ENCODE measurements at regions of chr1 and their contacts with region 1.

Region 1: GRCh38 chr1:112337028-112337531 is 58.9 kb upstream of the CTTNBP2NL start:
- DNase-seq: peak; percentile 36 to 51
- ATAC-seq: peak; percentile 68 to 91 (median 84)
- H3K4me3 ChIP-seq: peak overlapping the region in 1 of 10 donors; percentile 31
- H3K27ac ChIP-seq: no peak overlapping the region
- H3K4me1 ChIP-seq: peaks cover 0 to 8% (median 3%) of the 10 kb centered on the region in 9 donors
- H3K27me3 ChIP-seq: peaks cover 0 to 4% (median 0%) of the 10 kb centered on the region in 7 donors
- CTCF ChIP-seq: peak; percentile 53 to 80 (median 73)

Region 2: GRCh38 chr1:111789666-111790316 is 547.3 kb before region 1 on chr1:
- intact Hi-C with region 1: loop called in 6 of 10 experiments (anchors 2 to 10 kb)
- DNase-seq: no peak
- ATAC-seq: peak in 4 of 8 donors; percentile 39 to 49 (median 43)
- H3K4me3 ChIP-seq: no peak overlapping the region
- H3K27ac ChIP-seq: no peak overlapping the region
- H3K4me1 ChIP-seq: peaks cover 0 to 16% (median 0%) of the 10 kb centered on the region in 9 donors
- H3K27me3 ChIP-seq: no peaks in the 10 kb centered on the region
- CTCF ChIP-seq: peak in 4 of 9 donors; percentile 30 to 40 (median 34)

Region 3: DNA sequence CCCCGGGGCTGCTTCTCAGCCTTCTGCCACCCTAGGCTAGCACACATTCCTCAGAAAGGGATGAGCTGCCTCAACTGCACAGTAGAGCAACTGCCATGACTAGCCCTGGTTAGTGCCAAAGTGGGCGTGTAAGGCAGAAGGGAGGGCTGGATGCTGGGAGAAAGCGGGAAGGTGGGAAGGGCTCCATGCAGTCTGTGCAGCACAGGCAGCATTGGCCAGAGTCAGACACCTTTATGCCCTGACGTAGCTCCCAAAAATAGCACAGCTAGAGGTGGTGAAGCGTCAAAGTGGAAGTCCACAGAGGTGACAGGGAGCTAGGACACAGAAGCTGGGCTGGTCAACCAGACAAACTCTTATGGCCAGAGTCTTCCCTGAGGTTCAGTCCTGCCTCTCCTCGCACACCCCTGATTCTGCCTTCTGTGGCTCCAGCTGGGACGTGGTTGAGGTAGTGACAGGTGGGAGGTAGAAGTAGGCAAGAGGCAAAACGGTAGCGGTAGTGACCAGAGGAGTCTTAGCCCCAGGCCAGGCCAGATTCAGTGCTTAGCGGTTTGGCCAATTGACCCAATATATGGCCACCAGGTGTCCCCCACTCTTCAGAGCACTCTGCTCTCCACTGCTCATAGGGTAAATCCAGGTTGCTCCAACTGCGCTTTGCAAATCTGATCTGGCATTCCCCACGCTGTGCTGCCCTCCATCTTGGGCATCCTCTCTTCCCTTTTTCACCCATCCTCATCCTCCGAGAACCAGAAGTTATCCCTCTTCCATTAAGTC is 535.8 kb before region 1 on chr1:
- intact Hi-C with region 1: loop called in 6 of 10 experiments (anchors 2 to 10 kb)
- DNase-seq: peak; percentile 37 to 65
- ATAC-seq: peak; percentile 85 to 94 (median 91)
- H3K4me3 ChIP-seq: no peak overlapping the region
- H3K27ac ChIP-seq: peak overlapping the region; percentile 38 to 80 (median 64)
- H3K4me1 ChIP-seq: peaks cover 0 to 27% (median 9%) of the 10 kb centered on the region in 9 donors
- H3K27me3 ChIP-seq: no peaks in the 10 kb centered on the region
- CTCF ChIP-seq: peak in 6 of 9 donors; percentile 6 to 33 (median 21)

Region 4: DNA sequence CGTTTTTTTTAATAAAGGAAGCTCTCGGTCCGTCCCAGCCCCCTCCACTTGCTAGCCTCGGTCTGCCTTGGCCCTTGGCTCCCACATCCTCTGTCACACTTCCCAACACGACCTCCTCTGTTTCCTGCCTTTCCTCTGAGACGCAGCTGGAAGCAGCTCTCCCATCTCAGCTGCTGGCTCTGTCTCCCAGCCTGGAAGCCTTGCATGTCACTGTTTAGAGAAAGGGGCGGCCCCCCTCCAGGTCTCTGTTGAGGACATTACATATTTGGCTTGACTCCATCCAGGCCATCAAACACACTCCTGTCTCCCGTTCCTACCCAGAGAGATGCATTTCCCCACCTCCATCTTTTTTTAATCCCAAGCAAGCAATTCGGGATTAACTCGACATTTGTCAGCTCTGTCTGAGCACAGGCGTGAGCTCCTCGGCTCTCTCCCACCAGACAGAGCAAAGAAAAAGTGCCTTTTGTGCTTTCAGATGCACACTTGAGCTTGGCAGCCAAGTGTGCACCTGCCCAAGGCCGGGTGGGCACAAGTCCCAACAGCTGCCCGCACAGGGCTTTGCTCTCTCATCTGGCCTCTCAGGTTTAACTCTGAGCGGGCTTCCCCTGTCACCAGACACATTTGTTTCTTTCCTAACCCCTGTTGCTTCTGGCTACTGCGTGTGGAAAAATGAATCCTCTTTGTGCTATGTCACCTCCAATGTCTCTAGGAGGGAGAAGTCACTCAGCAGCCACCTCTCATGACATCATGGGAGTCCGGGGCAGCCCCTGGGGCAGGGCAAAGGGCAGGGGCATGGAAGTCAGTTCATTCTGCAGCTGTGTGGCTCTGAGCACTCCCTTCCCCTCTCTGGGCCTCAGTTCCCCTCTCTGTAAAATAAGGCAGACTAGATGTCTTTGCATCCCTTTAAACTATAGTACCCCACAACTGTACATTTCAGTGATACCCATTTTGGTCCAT is 455.9 kb before region 1 on chr1:
- intact Hi-C with region 1: loop called in 3 of 10 experiments (anchors 10 kb)
- DNase-seq: peak; percentile 41 to 52
- ATAC-seq: peak; percentile 40 to 74 (median 62)
- H3K4me3 ChIP-seq: no peak overlapping the region
- H3K27ac ChIP-seq: peak overlapping the region in 3 of 10 donors; percentile 8 to 41 (median 13)
- H3K4me1 ChIP-seq: peaks cover 7 to 66% (median 35%) of the 10 kb centered on the region in 9 donors
- H3K27me3 ChIP-seq: peaks cover 0 to 6% (median 0%) of the 10 kb centered on the region in 7 donors
- CTCF ChIP-seq: no peak

Region 5: DNA sequence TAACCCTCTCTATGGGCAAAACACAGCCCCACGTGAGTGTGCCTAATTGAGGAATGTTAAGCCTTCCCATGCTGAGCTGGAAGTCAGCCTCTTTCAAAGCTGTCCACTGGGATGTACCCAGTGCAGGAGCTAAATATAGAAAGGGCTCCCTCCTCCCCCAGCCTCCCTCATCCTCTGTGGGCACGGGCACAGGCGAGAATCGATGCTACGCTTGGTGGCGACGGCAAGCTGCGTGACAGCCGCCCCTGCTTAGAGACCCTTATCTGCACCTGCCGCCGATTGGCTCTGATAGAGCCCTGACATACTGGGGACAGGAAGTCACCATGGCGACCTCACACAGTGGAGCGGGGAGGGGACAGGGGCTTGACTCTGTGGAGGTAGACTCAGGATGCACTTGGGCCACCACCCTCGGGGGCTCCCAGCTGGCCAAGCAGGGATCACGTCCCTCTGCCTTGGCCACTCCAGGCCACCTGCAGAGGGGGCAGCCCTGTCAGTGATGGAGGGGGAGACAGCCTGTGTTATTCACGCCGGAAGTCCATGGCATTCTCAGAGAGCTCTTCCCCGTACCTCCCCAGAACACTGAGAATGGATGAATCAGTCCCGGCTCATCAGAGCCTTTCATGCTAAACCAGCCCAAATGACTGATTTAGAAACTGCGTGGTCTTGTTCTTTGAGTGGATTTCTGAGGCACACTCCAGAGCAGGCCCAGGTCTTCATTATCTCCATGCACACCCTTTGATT is 432.4 kb before region 1 on chr1:
- intact Hi-C with region 1: loop called in 1 of 10 experiments (anchors 10 kb)
- DNase-seq: peak; percentile 24 to 48
- ATAC-seq: peak; percentile 71 to 95 (median 90)
- H3K4me3 ChIP-seq: no peak overlapping the region
- H3K27ac ChIP-seq: peak overlapping the region in 7 of 10 donors; percentile 10 to 72 (median 49)
- H3K4me1 ChIP-seq: peaks cover 0 to 39% (median 19%) of the 10 kb centered on the region in 9 donors
- H3K27me3 ChIP-seq: peaks cover 0 to 5% (median 0%) of the 10 kb centered on the region in 7 donors
- CTCF ChIP-seq: peak in 1 of 9 donors; percentile 27

Region 6: DNA sequence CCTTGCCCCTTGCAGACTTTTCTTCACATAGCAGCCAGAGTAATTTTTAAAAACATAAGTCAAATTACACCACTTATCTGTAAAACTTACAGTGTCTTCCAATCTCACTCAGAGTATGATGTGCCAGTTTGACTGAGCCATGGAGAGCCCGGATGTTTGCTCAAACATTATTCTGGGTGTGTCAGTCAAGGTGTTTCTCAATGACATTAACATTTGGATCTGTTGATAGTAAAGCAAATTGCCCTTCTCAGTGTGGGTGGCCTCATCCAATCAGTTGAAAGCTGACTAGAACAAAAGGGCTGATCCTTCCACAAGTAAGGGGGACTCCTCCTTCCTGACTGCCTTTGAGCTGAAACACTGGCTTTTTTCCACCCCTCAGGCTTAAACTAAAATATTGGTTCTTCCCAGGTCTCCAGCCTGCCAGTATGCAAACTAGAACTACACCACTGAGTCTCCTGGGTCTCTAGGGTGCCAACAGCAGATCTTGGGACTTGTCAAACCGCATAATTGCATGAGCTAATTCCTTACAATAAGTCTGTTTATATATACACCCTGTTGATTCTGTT is 99.0 kb before region 1 on chr1:
- intact Hi-C with region 1: no loop called
- DNase-seq: no peak
- ATAC-seq: no peak
- H3K4me3 ChIP-seq: no peak overlapping the region
- H3K27ac ChIP-seq: no peak overlapping the region
- H3K4me1 ChIP-seq: no peaks in the 10 kb centered on the region
- H3K27me3 ChIP-seq: no peaks in the 10 kb centered on the region
- CTCF ChIP-seq: no peak

Region 7: GRCh38 chr1:112267929-112268328 is 69.2 kb before region 1 on chr1:
- intact Hi-C with region 1: no loop called
- DNase-seq: peak; percentile 38 to 76
- ATAC-seq: peak; percentile 67 to 89 (median 76)
- H3K4me3 ChIP-seq: no peak overlapping the region
- H3K27ac ChIP-seq: peak overlapping the region in 7 of 10 donors; percentile 11 to 72 (median 47)
- H3K4me1 ChIP-seq: peaks cover 6 to 56% (median 35%) of the 10 kb centered on the region in 9 donors
- H3K27me3 ChIP-seq: no peaks in the 10 kb centered on the region
- CTCF ChIP-seq: no peak